Upper lobe of right lung (tissue), 1 donor: ENCODE measurements at regions of chr6 and their contacts with region 1.

Region 1: DNA sequence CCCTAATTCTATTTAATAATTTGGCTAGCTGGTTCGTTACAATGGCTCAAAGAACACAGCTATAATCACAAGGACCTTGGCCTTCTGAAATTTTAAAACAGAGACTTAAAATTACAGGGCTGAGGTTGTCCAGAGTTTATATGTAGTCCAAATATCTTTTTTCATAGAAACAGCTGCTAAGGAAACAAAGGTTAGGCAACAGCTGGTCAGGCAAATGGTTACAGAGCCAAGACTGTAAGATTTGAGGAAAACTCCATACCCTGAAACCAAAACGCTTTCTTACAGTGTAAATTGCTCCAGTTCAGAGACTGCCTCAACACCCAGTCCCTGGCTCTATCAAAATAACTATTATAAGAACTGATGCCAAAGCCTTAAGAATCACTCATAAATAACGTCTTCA is 9.7 kb upstream of the ARHGAP18 start:
- DNase-seq: no peak
- ATAC-seq: no peak
- H3K4me3 ChIP-seq: no peak overlapping the region
- H3K27ac ChIP-seq: no peak overlapping the region
- H3K4me1 ChIP-seq: no peaks in the 10 kb centered on the region
- H3K27me3 ChIP-seq: no peaks in the 10 kb centered on the region
- CTCF ChIP-seq: no peak

Region 2: DNA sequence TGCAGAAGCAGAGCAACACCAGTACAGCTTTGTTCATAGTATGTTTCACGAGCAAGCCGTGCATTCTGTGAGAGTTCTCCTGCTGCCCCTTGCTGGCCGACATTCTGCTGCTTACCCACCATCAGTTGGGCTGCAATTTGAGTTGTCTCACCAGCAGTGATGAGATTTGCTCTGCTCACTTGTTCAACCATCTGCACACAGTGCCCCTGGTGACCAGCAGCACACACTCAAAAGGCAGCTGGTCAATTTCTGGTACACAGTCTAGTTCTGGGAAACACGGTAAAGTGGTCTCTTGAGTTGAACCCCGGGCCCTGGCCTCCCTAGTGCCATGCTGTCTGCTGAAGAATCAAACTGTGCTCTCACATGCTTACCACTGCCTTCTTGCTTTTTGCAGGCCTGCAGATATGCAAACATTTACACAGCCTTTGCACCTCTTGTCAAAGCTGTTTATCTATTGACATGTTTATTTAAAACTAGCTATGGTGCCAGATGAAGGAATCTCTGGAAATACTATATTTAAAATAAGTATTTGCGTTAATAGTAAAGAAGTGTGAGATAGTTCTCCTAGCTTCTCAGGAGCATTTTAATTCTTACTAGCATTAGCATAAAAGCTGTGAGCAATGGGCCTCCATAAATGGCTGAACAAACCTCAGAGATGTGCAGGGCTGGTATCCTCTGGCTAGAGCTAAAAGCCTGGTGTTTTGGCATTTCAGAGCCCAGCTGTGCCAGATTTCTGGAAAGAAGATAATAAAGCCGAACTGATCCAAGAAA is 244.0 kb before region 1 on chr6:
- intact Hi-C with region 1: no loop called
- DNase-seq: no peak
- ATAC-seq: no peak
- H3K4me3 ChIP-seq: no peak overlapping the region
- H3K27ac ChIP-seq: no peak overlapping the region
- H3K4me1 ChIP-seq: no peaks in the 10 kb centered on the region
- H3K27me3 ChIP-seq: no peaks in the 10 kb centered on the region
- CTCF ChIP-seq: no peak

Region 3: DNA sequence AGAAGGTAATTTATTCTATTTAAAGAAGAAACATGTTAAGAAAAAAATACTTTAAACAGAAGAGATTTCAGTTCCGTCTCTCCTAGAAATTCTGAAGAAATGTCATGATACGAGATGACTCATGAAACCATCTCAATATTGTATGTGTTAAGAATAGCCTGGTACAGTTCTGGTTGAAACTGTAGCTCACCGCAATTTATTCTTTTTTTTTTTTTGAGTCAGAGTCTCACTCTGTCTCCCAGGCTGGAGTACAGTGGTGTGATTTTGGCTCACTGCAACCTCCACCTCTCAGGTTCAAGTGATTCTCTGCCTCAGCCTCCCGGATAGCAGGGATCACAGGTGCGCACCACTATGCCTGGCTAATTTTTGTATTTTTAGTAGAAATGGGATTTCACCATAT is 113.0 kb before region 1 on chr6:
- intact Hi-C with region 1: loop called (anchors 10 kb)
- DNase-seq: no peak
- ATAC-seq: peak; percentile 51
- H3K4me3 ChIP-seq: no peak overlapping the region
- H3K27ac ChIP-seq: no peak overlapping the region
- H3K4me1 ChIP-seq: no peaks in the 10 kb centered on the region
- H3K27me3 ChIP-seq: no peaks in the 10 kb centered on the region
- CTCF ChIP-seq: no peak